ENCODE measurements at regions of chr18 and their contacts with region 1.

Region 1: DNA sequence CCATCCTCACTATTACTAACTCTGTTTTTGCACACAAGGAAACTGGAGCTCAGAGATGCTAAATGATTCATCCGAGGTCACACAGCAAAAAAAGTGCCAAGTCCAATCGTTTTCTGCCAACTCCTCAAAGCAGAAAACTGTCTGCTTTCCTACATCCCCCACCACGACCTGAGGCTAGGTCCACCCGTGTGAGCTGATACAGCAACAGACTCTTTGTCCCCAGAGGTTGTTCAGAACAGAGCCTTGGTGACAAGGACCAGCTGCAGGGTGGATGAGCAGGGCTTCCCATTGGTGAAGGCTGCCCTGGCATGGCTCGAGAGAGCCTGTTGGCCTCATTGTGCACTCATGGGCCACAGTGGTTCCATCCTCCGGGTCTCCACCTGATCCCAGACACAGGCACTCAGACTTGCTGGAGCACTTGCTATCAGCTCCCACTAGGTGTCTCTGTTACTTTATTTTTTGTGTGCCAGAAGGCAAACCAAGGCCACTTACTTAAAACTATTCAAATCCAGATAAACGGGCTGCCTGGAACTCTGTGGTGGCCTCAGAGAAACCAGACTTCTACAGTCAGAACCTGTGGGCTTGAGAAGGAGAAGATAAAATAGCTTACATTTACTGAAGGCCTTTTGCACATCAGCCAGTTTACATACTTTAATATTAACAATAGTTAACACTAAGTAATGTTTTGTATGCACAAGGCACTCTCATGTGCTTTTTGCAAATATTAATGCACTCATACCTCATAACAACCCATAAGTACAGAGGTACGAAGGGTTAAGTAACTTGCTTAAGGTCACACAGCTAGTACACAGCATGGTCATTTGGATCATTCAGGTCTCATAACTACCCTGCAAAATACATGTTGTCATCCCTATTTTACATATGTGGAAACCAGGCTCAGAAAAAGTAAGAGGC is 62.9 kb upstream of the CTIF start:
- H3K4me3 ChIP-seq: no peak overlapping the region
- H3K27ac ChIP-seq: no peak overlapping the region
- H3K4me1 ChIP-seq: no peaks in the 10 kb centered on the region
- CTCF ChIP-seq: peak; percentile 73

Region 2: DNA sequence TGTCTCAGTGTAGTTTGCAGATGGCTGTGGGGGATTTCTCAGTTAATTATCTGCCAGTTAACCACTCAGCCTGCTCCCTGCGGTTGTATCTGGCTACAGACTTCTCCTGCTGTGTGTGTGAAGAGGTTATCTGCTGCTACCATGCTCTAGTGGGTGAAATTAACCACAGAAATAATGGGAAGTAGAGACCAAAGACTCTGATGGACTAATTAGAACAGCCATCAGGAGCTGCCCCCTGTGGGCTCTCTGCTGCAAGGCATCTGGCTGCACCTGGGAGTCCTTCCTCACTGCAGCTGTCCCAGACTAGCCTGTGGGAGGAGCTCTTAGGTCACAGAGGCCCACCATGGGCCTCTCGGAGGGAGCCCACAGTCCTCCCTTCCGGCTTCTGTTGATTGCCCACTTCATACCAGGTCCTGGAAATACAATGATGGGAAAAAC is 129.5 kb after region 1 on chr18:
- CTCF ChIA-PET with region 1: interaction called, 44 read pairs
- POLR2A ChIA-PET with region 1: interaction called, 4 read pairs
- H3K4me3 ChIP-seq: no peak overlapping the region
- H3K27ac ChIP-seq: no peak overlapping the region
- H3K4me1 ChIP-seq: no peaks in the 10 kb centered on the region; the same call in 1 of the 2 replicates
- CTCF ChIP-seq: peak; percentile 55

Region 3: GRCh38 chr18:48649231-48649630 is 173.3 kb after region 1 on chr18:
- CTCF ChIA-PET with region 1: interaction called, 10 read pairs
- POLR2A ChIA-PET with region 1: no interaction called
- H3K4me3 ChIP-seq: no peak overlapping the region
- H3K27ac ChIP-seq: no peak overlapping the region
- H3K4me1 ChIP-seq: no peaks in the 10 kb centered on the region
- CTCF ChIP-seq: 0 out of 2 replicates have a peak, but pooled peaks have one; percentile 12

Region 4: GRCh38 chr18:48675352-48675761 is 199.5 kb after region 1 on chr18:
- CTCF ChIA-PET with region 1: interaction called, 35 read pairs
- POLR2A ChIA-PET with region 1: no interaction called
- H3K4me3 ChIP-seq: no peak overlapping the region
- H3K27ac ChIP-seq: no peak overlapping the region
- H3K4me1 ChIP-seq: no peaks in the 10 kb centered on the region
- CTCF ChIP-seq: peak; percentile 99